ENCODE measurements at regions of chr16 and their contacts with region 1.

Region 1: GRCh38 chr16:72501739-72502593 is 330.0 kb upstream of the PMFBP1 start:
- DNase-seq: peak in 10 of 14 experiments; percentile 1 to 44 (median 12)
- ATAC-seq: no peak
- H3K4me3 ChIP-seq: no peak overlapping the region
- H3K4me3 Mint-ChIP-seq: no peak overlapping the region
- H3K27ac ChIP-seq: no peak overlapping the region
- H3K27ac Mint-ChIP-seq: no peak overlapping the region
- H3K4me1 ChIP-seq: no peaks in the 10 kb centered on the region
- H3K4me1 Mint-ChIP-seq: peaks cover 9% of the 10 kb centered on the region
- H3K27me3 ChIP-seq: no peaks in the 10 kb centered on the region
- H3K27me3 Mint-ChIP-seq: no peaks in the 10 kb centered on the region
- CTCF ChIP-seq: peak; percentile 30

Region 2: DNA sequence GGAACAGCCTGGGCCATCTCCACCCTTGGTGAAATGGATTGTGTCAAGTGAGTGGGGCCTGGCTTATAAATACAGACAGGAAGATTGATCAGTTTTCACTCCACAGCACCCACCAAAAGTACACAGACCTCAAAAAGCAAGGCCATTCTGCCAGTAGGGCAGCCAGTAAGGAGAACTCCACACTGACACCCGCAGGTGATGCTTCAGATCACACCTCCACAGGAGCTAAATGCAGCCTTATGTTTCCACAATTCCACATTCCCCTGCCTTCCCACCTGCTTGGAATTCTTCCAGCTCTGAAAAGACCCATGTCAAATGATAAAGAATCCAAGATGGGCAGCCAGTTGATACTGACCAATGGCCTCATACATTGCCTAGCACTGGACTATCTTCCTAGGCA is 354.8 kb after region 1 on chr16:
- CTCF ChIA-PET with region 1: no interaction called
- POLR2A ChIA-PET with region 1: no interaction called
- intact Hi-C with region 1: loop called in 1 of 2 experiments (anchors 10 kb)
- DNase-seq: no peak
- ATAC-seq: no peak
- H3K4me3 ChIP-seq: no peak overlapping the region
- H3K4me3 Mint-ChIP-seq: no peak overlapping the region
- H3K27ac ChIP-seq: no peak overlapping the region
- H3K27ac Mint-ChIP-seq: no peak overlapping the region
- H3K4me1 ChIP-seq: no peaks in the 10 kb centered on the region
- H3K4me1 Mint-ChIP-seq: no peaks in the 10 kb centered on the region
- H3K27me3 ChIP-seq: no peaks in the 10 kb centered on the region
- H3K27me3 Mint-ChIP-seq: peaks cover 4% of the 10 kb centered on the region
- CTCF ChIP-seq: no peak

Region 3: DNA sequence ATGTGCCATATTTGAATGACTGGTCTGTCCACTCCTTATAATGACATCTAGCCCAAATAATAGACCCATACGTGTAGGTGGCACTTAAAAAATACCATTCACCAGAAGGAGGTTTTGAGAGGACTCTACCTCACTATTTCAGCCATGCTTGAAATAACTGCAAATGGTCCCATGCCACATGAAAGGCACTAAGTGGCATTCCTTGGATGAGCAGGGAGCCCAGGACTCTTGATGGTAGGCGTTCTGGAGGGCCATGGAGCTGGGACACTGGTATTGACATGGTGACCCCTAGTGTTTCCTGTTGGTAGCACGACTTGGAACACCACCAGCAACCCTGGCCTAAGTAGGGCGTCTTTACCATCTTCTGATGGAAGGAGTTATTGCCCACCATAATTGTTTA is 694.7 kb after region 1 on chr16:
- CTCF ChIA-PET with region 1: no interaction called
- POLR2A ChIA-PET with region 1: no interaction called
- intact Hi-C with region 1: loop called in 1 of 2 experiments (anchors 10 kb)
- DNase-seq: peak in 4 of 14 experiments; percentile 23 to 57 (median 42)
- ATAC-seq: no peak
- H3K4me3 ChIP-seq: no peak overlapping the region
- H3K4me3 Mint-ChIP-seq: no peak overlapping the region
- H3K27ac ChIP-seq: no peak overlapping the region
- H3K27ac Mint-ChIP-seq: no peak overlapping the region
- H3K4me1 ChIP-seq: no peaks in the 10 kb centered on the region
- H3K4me1 Mint-ChIP-seq: no peaks in the 10 kb centered on the region
- H3K27me3 ChIP-seq: no peaks in the 10 kb centered on the region
- H3K27me3 Mint-ChIP-seq: no peaks in the 10 kb centered on the region
- CTCF ChIP-seq: no peak

Region 4: GRCh38 chr16:73956587-73957494 is 1454.9 kb after region 1 on chr16:
- CTCF ChIA-PET with region 1: no interaction called
- POLR2A ChIA-PET with region 1: no interaction called
- intact Hi-C with region 1: loop called in 1 of 2 experiments (anchors 5 kb)
- DNase-seq: peak in 5 of 14 experiments; percentile 8 to 47 (median 25)
- ATAC-seq: no peak
- H3K4me3 ChIP-seq: no peak overlapping the region
- H3K4me3 Mint-ChIP-seq: no peak overlapping the region
- H3K27ac ChIP-seq: no peak overlapping the region
- H3K27ac Mint-ChIP-seq: no peak overlapping the region
- H3K4me1 ChIP-seq: no peaks in the 10 kb centered on the region
- H3K4me1 Mint-ChIP-seq: no peaks in the 10 kb centered on the region
- H3K27me3 ChIP-seq: no peaks in the 10 kb centered on the region
- H3K27me3 Mint-ChIP-seq: peaks cover 5% of the 10 kb centered on the region
- CTCF ChIP-seq: peak; percentile 58

Measured in CD4-positive, alpha-beta T cell (primary cell).